ENCODE measurements at regions of chr17 and their contacts with region 1.

Region 1: DNA sequence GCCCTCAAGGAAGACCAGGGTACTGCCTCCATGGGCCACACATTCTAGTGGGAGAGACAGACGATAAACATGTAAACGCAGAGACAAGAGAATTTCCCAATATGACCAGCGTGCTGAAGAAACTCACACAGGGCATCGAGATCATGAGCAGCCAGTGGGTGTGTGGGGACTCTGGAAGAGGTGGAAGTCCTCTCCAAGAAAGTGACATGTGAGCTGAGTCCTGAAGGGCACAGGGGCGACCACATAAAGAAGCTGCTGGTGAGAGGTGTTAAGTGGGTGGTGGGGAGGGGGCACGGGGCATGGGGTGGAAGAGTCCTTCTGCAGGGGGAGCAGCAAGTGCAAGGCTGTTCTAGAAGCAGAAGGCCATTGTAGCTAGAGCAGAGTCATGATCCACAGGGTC is 21.0 kb upstream of the RAP1GAP2 start:
- DNase-seq: no peak
- ATAC-seq: no peak
- H3K4me3 ChIP-seq: no peak overlapping the region
- H3K27ac ChIP-seq: no peak overlapping the region
- H3K4me1 ChIP-seq: no peaks in the 10 kb centered on the region
- H3K27me3 ChIP-seq: peaks cover 34% of the 10 kb centered on the region
- CTCF ChIP-seq: no peak
- POLR2A ChIP-seq: no peak
- RAD21 ChIP-seq: no peak

Region 2: GRCh38 chr17:2724778-2725164 is 50.4 kb before region 1 on chr17:
- CTCF ChIA-PET with region 1: no interaction called
- POLR2A ChIA-PET with region 1: no interaction called
- dilution Hi-C with region 1: no loop called
- in situ Hi-C with region 1: no loop called
- intact Hi-C with region 1: no loop called
- DNase-seq: peak; percentile 26
- ATAC-seq: peak; percentile 87
- H3K4me3 ChIP-seq: peak overlapping the region; percentile 17
- H3K27ac ChIP-seq: no peak overlapping the region
- H3K4me1 ChIP-seq: no peaks in the 10 kb centered on the region
- H3K27me3 ChIP-seq: peaks cover 51% of the 10 kb centered on the region
- CTCF ChIP-seq: 0 out of 2 replicates have a peak, but pooled peaks have one; percentile 7
- POLR2A ChIP-seq: no peak
- RAD21 ChIP-seq: no peak

Region 3: DNA sequence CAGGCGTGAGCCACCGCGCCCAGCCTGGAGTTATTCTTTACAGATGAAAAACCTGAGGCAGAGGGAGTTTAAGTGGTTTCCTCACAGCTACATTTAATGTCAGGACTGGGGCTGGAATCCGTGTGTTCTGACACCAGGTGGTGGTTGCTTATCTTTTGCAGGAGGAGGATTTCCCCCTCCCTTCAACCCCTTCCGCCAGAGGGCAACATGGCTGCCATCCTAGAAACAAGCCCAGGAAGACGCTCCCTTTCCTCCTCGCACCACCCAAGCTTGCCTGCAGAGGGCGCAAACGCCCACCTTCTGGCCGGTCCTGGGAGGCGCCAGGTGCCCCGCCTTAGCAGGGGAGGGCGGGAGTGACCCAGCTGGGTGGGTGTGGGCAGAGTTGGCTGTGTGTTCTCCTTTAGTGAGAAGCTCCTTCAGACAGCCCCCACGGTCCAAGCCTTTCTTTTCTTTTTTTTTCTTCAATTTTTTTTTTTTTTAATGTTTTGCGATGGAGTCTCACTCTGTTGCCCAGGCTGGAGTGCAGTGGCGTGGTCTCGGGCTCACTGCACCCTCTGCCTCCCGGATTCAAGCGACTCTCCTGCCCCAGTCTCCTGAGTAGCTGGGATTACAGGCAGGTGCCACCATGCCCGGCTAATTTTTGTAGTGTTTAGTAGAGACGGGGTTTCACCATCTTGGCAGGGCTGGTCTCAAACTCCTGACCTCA is 11.1 kb after region 1 on chr17:
- CTCF ChIA-PET with region 1: interaction called, 3 read pairs
- POLR2A ChIA-PET with region 1: interaction called, 18 read pairs
- dilution Hi-C with region 1: no loop called
- in situ Hi-C with region 1: no loop called
- intact Hi-C with region 1: no loop called
- DNase-seq: peak; percentile 69
- ATAC-seq: peak; percentile 96
- H3K4me3 ChIP-seq: no peak overlapping the region
- H3K27ac ChIP-seq: no peak overlapping the region
- H3K4me1 ChIP-seq: no peaks in the 10 kb centered on the region
- H3K27me3 ChIP-seq: peaks cover 3% of the 10 kb centered on the region
- CTCF ChIP-seq: peak; percentile 67
- POLR2A ChIP-seq: no peak
- RAD21 ChIP-seq: peak; percentile 55

Measured in IMR-90 (cell line).